Activated naive CD4-positive, alpha-beta T cell treated with anti-CD3 and anti-CD28 coated beads for 36 hours (primary cell): ENCODE measurements at regions of chr5 and their contacts with region 1.

Region 1: GRCh38 chr5:35902046-35902676 is 36.3 kb downstream of the CAPSL start:
- DNase-seq: peak; percentile 58
- H3K4me3 Mint-ChIP-seq: no peak overlapping the region
- H3K27ac Mint-ChIP-seq: peak overlapping the region; percentile 34
- H3K4me1 Mint-ChIP-seq: peaks cover 85% of the 10 kb centered on the region
- H3K27me3 Mint-ChIP-seq: no peaks in the 10 kb centered on the region

Region 2: DNA sequence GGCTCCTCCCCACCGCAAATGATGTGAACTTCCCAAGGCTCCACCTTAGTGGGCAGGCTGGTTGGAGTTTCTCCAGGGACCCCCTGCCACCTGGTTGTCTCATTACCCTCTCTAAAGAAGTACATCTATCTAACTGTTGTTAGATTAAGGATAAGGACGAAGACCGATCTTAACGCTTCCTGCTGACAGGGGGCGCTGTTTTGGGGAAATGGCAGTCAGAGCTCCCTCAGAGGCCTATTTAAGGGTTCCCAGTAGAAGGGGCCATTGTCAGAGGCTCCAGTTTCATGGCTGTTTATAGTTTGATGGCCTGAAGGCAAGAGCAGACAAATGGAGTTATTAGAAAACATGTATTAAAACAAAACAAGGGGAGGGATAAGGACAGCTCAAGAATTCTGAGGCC is 184.4 kb before region 1 on chr5:
- CTCF ChIA-PET with region 1: no interaction called
- intact Hi-C with region 1: no loop called
- DNase-seq: no peak
- H3K4me3 Mint-ChIP-seq: no peak overlapping the region
- H3K27ac Mint-ChIP-seq: no peak overlapping the region
- H3K4me1 Mint-ChIP-seq: no peaks in the 10 kb centered on the region
- H3K27me3 Mint-ChIP-seq: no peaks in the 10 kb centered on the region

Region 3: GRCh38 chr5:35736280-35736679 is 165.9 kb before region 1 on chr5:
- CTCF ChIA-PET with region 1: no interaction called
- intact Hi-C with region 1: loop called (anchors 1 kb)
- DNase-seq: peak; percentile 83
- H3K4me3 Mint-ChIP-seq: no peak overlapping the region
- H3K27ac Mint-ChIP-seq: peak overlapping the region; percentile 73
- H3K4me1 Mint-ChIP-seq: peaks cover 58% of the 10 kb centered on the region
- H3K27me3 Mint-ChIP-seq: no peaks in the 10 kb centered on the region

Region 4: DNA sequence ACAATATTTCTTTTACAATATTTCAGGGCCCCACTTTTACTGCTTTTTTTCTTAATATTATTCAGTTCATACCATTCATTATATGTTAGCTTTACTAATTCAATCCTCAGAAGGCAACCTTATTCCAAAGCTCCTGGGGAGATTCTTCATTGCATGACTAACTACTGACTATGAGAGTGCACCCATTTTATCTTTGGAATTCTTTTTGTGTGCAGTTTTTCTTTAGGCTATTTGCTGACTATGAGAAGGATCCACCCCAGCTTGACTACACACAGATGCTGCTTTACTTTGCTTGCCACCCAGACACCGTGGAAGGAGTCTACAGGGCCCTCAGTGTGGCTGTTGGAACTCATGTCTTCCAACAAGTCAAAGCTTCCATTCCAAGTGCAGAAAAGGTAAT is 102.4 kb before region 1 on chr5:
- CTCF ChIA-PET with region 1: no interaction called
- intact Hi-C with region 1: loop called (anchors 1 kb)
- DNase-seq: no peak
- H3K4me3 Mint-ChIP-seq: no peak overlapping the region
- H3K27ac Mint-ChIP-seq: no peak overlapping the region
- H3K4me1 Mint-ChIP-seq: peaks cover 76% of the 10 kb centered on the region
- H3K27me3 Mint-ChIP-seq: no peaks in the 10 kb centered on the region

Region 5: GRCh38 chr5:35838370-35839042 is 63.7 kb before region 1 on chr5:
- CTCF ChIA-PET with region 1: no interaction called
- intact Hi-C with region 1: loop called (anchors 1 kb)
- DNase-seq: no peak
- H3K4me3 Mint-ChIP-seq: no peak overlapping the region
- H3K27ac Mint-ChIP-seq: peak overlapping the region; percentile 95
- H3K4me1 Mint-ChIP-seq: peaks cover 74% of the 10 kb centered on the region
- H3K27me3 Mint-ChIP-seq: no peaks in the 10 kb centered on the region

Region 6: GRCh38 chr5:35876921-35877320 is 25.2 kb before region 1 on chr5:
- CTCF ChIA-PET with region 1: interaction called, 7 read pairs
- intact Hi-C with region 1: loop called (anchors 2 kb)
- DNase-seq: peak; percentile 43
- H3K4me3 Mint-ChIP-seq: no peak overlapping the region
- H3K27ac Mint-ChIP-seq: peak overlapping the region; percentile 88
- H3K4me1 Mint-ChIP-seq: peaks cover 85% of the 10 kb centered on the region
- H3K27me3 Mint-ChIP-seq: no peaks in the 10 kb centered on the region

Region 7: DNA sequence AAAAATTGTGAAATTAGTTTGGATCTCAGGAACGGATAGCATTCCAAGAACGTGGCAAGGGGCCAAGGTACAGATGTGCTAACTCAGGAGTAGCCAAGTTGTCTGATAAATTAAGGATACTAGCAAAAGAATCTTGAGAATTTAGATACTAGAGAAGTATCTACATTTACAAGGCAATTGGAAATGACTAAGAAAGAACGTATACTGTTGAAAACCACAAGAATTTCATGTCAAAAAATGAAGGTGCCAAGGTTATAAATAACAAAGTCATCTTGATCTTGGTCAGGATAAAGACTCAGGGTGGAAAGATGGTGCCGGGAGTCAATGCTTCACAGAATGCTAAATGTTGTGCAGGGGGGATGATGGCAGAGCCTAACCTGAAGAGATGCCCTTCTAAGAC is 17.0 kb after region 1 on chr5:
- CTCF ChIA-PET with region 1: interaction called, 22 read pairs
- intact Hi-C with region 1: loop called (anchors 1 kb)
- DNase-seq: peak; percentile 54
- H3K4me3 Mint-ChIP-seq: no peak overlapping the region
- H3K27ac Mint-ChIP-seq: peak overlapping the region; percentile 46
- H3K4me1 Mint-ChIP-seq: peaks cover 45% of the 10 kb centered on the region
- H3K27me3 Mint-ChIP-seq: no peaks in the 10 kb centered on the region

Region 8: GRCh38 chr5:36089989-36090564 is 187.9 kb after region 1 on chr5:
- CTCF ChIA-PET with region 1: no interaction called
- intact Hi-C with region 1: no loop called
- DNase-seq: peak; percentile 16
- H3K4me3 Mint-ChIP-seq: no peak overlapping the region
- H3K27ac Mint-ChIP-seq: no peak overlapping the region
- H3K4me1 Mint-ChIP-seq: no peaks in the 10 kb centered on the region
- H3K27me3 Mint-ChIP-seq: peaks cover 6% of the 10 kb centered on the region

Region 9: GRCh38 chr5:36162810-36163486 is 260.8 kb after region 1 on chr5:
- CTCF ChIA-PET with region 1: no interaction called
- intact Hi-C with region 1: no loop called
- DNase-seq: no peak
- H3K4me3 Mint-ChIP-seq: no peak overlapping the region
- H3K27ac Mint-ChIP-seq: no peak overlapping the region
- H3K4me1 Mint-ChIP-seq: peaks cover 12% of the 10 kb centered on the region
- H3K27me3 Mint-ChIP-seq: no peaks in the 10 kb centered on the region

Region 10: GRCh38 chr5:36301858-36302603 is 399.9 kb after region 1 on chr5 and contains the start of gene RANBP3L:
- CTCF ChIA-PET with region 1: no interaction called
- intact Hi-C with region 1: no loop called
- DNase-seq: no peak
- H3K4me3 Mint-ChIP-seq: no peak within 1 kb of the TSS
- H3K27ac Mint-ChIP-seq: no peak within 1 kb of the TSS
- H3K4me1 Mint-ChIP-seq: peaks cover 19% of the 10 kb centered on the region
- H3K27me3 Mint-ChIP-seq: peaks cover 3% of the 10 kb centered on the region
- total RNA-seq, gene RANBP3L: 0.10 TPM in 1 of 2 experiments, not detected in the other

Region 11: GRCh38 chr5:36875790-36876388 is 973.7 kb after region 1 on chr5:
- CTCF ChIA-PET with region 1: no interaction called
- intact Hi-C with region 1: loop called (anchors 10 kb)
- DNase-seq: peak; percentile 77
- H3K4me3 Mint-ChIP-seq: peak overlapping the region; percentile 83
- H3K27ac Mint-ChIP-seq: peak overlapping the region; percentile 96
- H3K4me1 Mint-ChIP-seq: peaks cover 25% of the 10 kb centered on the region
- H3K27me3 Mint-ChIP-seq: no peaks in the 10 kb centered on the region